CD8-positive, alpha-beta T cell (primary cell): ENCODE measurements at regions of chr9 and their contacts with region 1.

Region 1: DNA sequence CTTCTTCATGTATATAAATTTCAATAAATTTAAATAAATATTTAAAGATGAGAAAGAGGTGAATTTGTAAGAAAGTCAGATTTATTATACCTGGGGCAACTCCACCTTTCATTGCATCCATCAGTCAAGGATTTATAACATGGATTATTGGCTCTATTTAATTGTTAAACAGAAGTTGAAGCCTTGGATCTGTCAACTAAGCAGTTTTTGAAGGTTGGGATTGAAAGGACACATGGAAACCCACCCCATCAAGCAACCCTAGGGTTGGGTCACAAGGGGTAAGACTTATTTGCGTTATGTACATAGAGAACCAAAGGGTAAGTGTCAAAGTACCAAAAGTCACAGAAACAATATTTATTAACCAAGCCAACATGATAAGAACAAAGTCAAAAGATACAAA is 342.5 kb downstream of the ELAVL2 start:
- DNase-seq: no peak
- ATAC-seq: no peak
- H3K4me3 ChIP-seq: no peak overlapping the region
- H3K4me3 Mint-ChIP-seq: no peak overlapping the region
- H3K27ac ChIP-seq: no peak overlapping the region
- H3K27ac Mint-ChIP-seq: no peak overlapping the region
- H3K4me1 ChIP-seq: no peaks in the 10 kb centered on the region
- H3K4me1 Mint-ChIP-seq: no peaks in the 10 kb centered on the region
- H3K27me3 ChIP-seq: no peaks in the 10 kb centered on the region
- H3K27me3 Mint-ChIP-seq: no peaks in the 10 kb centered on the region
- CTCF ChIP-seq: no peak

Region 2: DNA sequence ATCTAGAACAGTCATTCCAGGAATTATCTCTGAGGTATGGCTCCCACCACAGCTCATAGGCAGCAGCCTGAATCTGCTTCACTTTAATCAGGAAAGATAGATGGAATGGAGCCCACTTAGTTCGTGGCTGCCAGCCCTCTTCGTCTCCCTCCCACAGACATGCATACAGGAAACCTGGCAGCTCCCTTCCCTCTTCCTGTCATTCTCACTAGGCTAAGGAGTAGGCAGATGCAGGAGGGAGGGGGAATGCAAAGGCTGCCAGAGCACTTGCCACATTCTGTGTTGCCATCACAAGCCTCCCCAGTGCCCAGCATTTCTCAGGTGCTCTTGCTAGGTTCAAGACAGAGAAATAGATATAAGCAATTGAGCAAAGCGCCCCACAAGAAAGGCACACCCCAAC is 36.4 kb before region 1 on chr9:
- CTCF ChIA-PET with region 1: no interaction called
- POLR2A ChIA-PET with region 1: no interaction called
- intact Hi-C with region 1: no loop called
- DNase-seq: no peak
- ATAC-seq: no peak
- H3K4me3 ChIP-seq: no peak overlapping the region
- H3K4me3 Mint-ChIP-seq: no peak overlapping the region
- H3K27ac ChIP-seq: no peak overlapping the region
- H3K27ac Mint-ChIP-seq: no peak overlapping the region
- H3K4me1 ChIP-seq: no peaks in the 10 kb centered on the region
- H3K4me1 Mint-ChIP-seq: no peaks in the 10 kb centered on the region
- H3K27me3 ChIP-seq: no peaks in the 10 kb centered on the region
- H3K27me3 Mint-ChIP-seq: no peaks in the 10 kb centered on the region
- CTCF ChIP-seq: no peak

Region 3: GRCh38 chr9:23502004-23502403 is 18.4 kb after region 1 on chr9:
- CTCF ChIA-PET with region 1: no interaction called
- POLR2A ChIA-PET with region 1: no interaction called
- intact Hi-C with region 1: loop called in 1 of 2 experiments (anchors 2 kb)
- DNase-seq: no peak
- ATAC-seq: no peak
- H3K4me3 ChIP-seq: no peak overlapping the region
- H3K4me3 Mint-ChIP-seq: no peak overlapping the region
- H3K27ac ChIP-seq: no peak overlapping the region
- H3K27ac Mint-ChIP-seq: no peak overlapping the region
- H3K4me1 ChIP-seq: no peaks in the 10 kb centered on the region
- H3K4me1 Mint-ChIP-seq: no peaks in the 10 kb centered on the region
- H3K27me3 ChIP-seq: no peaks in the 10 kb centered on the region
- H3K27me3 Mint-ChIP-seq: no peaks in the 10 kb centered on the region
- CTCF ChIP-seq: no peak